Mammary epithelial cell (primary cell): ENCODE measurements at regions of chr7 and their contacts with region 1.

Region 1: GRCh38 chr7:2757904-2758672 is 70.1 kb downstream of the AMZ1 start:
- DNase-seq: peak; percentile 97
- H3K4me3 ChIP-seq: peak overlapping the region in 1 of 3 experiments; percentile 19
- H3K27ac ChIP-seq: peak overlapping the region; percentile 88
- H3K4me1 ChIP-seq: peaks cover 37% of the 10 kb centered on the region
- H3K27me3 ChIP-seq: no peaks in the 10 kb centered on the region
- CTCF ChIP-seq: no peak

Region 2: DNA sequence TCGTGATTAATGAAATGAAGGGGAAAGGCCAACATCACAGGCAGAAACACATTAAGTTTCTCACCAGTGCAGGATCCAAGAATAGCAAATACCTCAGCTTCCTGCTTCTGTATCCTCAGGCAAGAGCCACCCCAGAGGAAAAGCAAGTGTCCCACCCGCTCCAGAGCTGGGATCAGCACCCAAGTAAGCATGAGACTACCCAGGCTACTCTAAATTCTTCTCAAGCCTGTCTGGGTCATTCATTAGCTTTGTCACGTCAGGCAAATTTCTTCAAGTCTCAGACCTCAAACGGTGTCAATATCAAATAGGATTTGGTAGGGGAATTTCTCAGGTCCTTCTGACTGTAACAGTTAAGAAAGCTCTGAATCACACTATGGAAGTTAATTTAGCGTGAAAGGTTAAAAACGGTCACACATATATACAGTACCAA is 27.0 kb after region 1 on chr7:
- CTCF ChIA-PET with region 1: no interaction called
- dilution Hi-C with region 1: no loop called
- in situ Hi-C with region 1: no loop called
- intact Hi-C with region 1: no loop called
- DNase-seq: peak; percentile 18
- H3K4me3 ChIP-seq: no peak overlapping the region
- H3K27ac ChIP-seq: no peak overlapping the region
- H3K4me1 ChIP-seq: no peaks in the 10 kb centered on the region
- H3K27me3 ChIP-seq: no peaks in the 10 kb centered on the region
- CTCF ChIP-seq: no peak

Region 3: GRCh38 chr7:2807845-2808772 is 50.0 kb after region 1 on chr7:
- CTCF ChIA-PET with region 1: no interaction called
- dilution Hi-C with region 1: loop called (anchors 5 kb)
- in situ Hi-C with region 1: no loop called
- intact Hi-C with region 1: no loop called
- DNase-seq: no peak
- H3K4me3 ChIP-seq: no peak overlapping the region
- H3K27ac ChIP-seq: no peak overlapping the region
- H3K4me1 ChIP-seq: peaks cover 7% of the 10 kb centered on the region
- H3K27me3 ChIP-seq: no peaks in the 10 kb centered on the region
- CTCF ChIP-seq: no peak

Region 4: DNA sequence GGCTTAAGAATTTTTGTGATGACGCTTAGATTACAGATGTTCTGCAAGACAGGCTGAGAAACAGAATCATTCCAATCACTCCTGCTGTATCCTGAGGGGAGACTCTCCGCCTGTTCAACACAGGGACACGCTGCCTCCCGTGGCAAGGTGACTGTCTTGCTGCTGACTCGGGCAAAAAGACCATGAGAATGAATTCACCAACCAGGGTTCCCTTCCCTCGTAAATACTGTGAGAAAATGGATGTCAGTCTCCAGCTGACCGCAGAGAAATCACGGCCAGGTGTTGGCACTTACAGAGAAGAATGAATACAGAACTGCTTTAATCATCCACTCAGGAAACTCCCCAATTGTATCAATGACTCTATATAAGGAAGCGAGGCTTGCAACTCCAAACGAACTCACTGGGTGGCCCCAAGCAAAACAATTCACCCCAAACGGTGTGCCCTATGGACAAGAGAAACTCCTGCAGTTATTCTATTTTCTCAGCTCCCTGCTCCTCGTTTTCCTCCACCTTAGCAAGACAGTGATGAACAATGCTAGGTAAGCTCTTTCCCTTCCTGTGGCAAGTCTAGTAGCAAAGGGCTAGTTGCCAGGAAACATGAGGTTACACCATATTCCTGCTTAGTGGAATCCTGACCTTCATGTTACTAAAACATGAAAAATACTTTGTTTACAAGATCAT is 63.2 kb after region 1 on chr7:
- CTCF ChIA-PET with region 1: no interaction called
- dilution Hi-C with region 1: no loop called
- in situ Hi-C with region 1: no loop called
- intact Hi-C with region 1: loop called (anchors 1 kb)
- DNase-seq: peak; percentile 95
- H3K4me3 ChIP-seq: no peak overlapping the region
- H3K27ac ChIP-seq: peak overlapping the region; percentile 92
- H3K4me1 ChIP-seq: peaks cover 47% of the 10 kb centered on the region
- H3K27me3 ChIP-seq: no peaks in the 10 kb centered on the region
- CTCF ChIP-seq: peak; percentile 3 to 4

Region 5: DNA sequence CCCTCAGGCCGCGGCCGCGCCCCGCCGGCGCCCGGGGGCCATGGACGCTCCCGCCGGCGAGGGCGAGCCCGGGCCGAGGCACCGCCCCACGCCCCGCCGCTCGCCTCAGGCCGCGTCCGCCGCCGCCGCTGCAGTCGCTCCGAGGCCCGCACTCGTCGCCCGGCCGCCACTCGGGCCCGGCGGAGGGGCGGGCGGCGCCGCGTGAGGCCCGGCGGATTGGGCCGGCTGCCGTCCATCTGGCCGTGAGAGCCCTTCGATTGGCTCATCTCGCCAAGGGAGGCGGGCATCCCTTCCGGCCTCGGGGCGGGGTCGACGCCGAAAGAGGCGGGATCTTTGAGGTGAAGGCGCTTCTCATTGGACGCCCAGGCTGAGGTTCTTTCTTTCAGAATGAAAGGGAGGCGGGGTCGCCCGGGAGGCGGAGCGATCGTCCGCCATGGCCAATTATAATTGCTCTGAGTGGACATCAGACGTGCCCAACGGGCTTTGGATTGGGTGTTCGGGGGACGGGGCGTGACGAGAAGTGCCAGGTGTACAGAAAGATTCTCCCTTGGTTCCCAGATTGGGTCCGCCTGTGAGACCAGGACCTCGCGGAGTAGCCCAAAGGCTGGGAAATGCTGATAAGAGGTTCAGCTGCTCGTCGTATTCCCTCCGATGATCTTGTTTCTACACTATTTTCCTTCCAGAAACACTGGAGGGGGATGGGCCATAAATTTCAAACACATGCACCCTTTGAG is 86.2 kb after region 1 on chr7 and contains the start of gene GNA12:
- CTCF ChIA-PET with region 1: no interaction called
- dilution Hi-C with region 1: no loop called
- in situ Hi-C with region 1: no loop called
- intact Hi-C with region 1: loop called (anchors 2 kb)
- DNase-seq: peak; percentile 98
- H3K4me3 ChIP-seq: peak within 1 kb of the TSS; percentile 60 to 80 (median 65)
- H3K27ac ChIP-seq: peak within 1 kb of the TSS; percentile 30
- H3K4me1 ChIP-seq: peaks cover 13% of the 10 kb centered on the region
- H3K27me3 ChIP-seq: no peaks in the 10 kb centered on the region
- CTCF ChIP-seq: no peak
- total RNA-seq, gene GNA12: 26.2 to 46.0 TPM

Region 6: GRCh38 chr7:2921653-2922347 is 163.7 kb after region 1 on chr7:
- CTCF ChIA-PET with region 1: no interaction called
- dilution Hi-C with region 1: loop called (anchors 10 kb)
- in situ Hi-C with region 1: no loop called
- intact Hi-C with region 1: no loop called
- DNase-seq: no peak
- H3K4me3 ChIP-seq: no peak overlapping the region
- H3K27ac ChIP-seq: no peak overlapping the region
- H3K4me1 ChIP-seq: peaks cover 13% of the 10 kb centered on the region
- H3K27me3 ChIP-seq: no peaks in the 10 kb centered on the region
- CTCF ChIP-seq: peak; percentile 33 to 34